ENCODE measurements at regions of chr19 and their contacts with region 1.

Region 1: GRCh38 chr19:2236314-2237050 is at the starts of genes PLEKHJ1 and SF3A2:
- DNase-seq: peak; percentile 94 to 99 (median 98)
- ATAC-seq: peak; percentile 81
- H3K4me3 ChIP-seq: peak within 1 kb of the TSS; percentile 80
- H3K4me3 Mint-ChIP-seq: peak within 1 kb of the TSS; percentile 98
- H3K27ac ChIP-seq: peak within 1 kb of the TSS; percentile 98 to 99
- H3K27ac Mint-ChIP-seq: peak within 1 kb of the TSS; percentile 99
- H3K4me1 ChIP-seq: peaks cover 79% of the 10 kb centered on the region
- H3K4me1 Mint-ChIP-seq: peaks cover 63% of the 10 kb centered on the region
- H3K27me3 ChIP-seq: no peaks in the 10 kb centered on the region
- H3K27me3 Mint-ChIP-seq: peaks cover 4% of the 10 kb centered on the region
- CTCF ChIP-seq: peak; percentile 99
- total RNA-seq, gene PLEKHJ1: 21.4 to 23.2 TPM
- total RNA-seq, gene SF3A2: 186 to 194 TPM

Region 2: DNA sequence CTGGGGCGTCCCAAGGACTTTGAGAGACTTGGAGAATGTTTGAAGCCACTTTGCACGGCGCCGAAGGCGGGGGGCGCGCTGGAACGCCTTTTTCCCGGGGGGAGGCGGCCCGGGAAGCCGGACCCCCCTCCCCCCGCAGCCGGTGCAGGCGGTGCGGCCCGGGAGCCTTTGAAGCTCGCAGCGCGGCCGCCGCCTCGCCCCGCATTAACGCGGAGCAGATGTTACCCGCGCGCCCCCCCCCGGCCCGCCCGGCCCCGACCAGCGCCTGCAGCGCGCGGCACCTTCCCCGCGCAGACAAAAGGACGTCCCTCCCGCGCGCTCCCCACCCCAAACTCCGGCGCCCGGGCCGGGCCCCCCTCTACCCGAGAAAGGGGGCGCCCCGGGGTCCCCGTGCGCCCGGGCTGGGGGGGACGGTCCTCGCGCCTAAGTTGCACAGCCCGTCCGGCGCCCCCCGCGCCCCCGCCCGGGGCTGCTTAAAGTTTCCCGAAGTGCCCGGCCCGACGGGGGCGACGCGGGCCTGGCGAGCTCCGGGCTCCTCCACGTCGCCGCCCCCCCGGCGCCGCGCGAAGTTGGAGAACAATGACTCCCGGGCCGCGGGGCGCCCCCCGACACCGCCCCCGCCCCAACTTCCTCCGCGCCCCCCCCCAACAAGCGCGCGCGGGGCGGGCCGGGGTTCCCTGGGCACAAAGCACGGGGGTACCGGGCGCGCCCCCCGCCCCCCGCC is 584.8 kb before region 1 on chr19:
- CTCF ChIA-PET with region 1: no interaction called
- POLR2A ChIA-PET with region 1: no interaction called
- intact Hi-C with region 1: no loop called
- DNase-seq: peak in 13 of 14 experiments; percentile 20 to 78 (median 49)
- ATAC-seq: no peak
- H3K4me3 ChIP-seq: peak overlapping the region; percentile 62
- H3K4me3 Mint-ChIP-seq: peak overlapping the region; percentile 97
- H3K27ac ChIP-seq: peak overlapping the region in 1 of 2 donors; percentile 56
- H3K27ac Mint-ChIP-seq: peak overlapping the region; percentile 94
- H3K4me1 ChIP-seq: peaks cover 26% of the 10 kb centered on the region
- H3K4me1 Mint-ChIP-seq: peaks cover 14% of the 10 kb centered on the region
- H3K27me3 ChIP-seq: no peaks in the 10 kb centered on the region
- H3K27me3 Mint-ChIP-seq: peaks cover 3% of the 10 kb centered on the region
- CTCF ChIP-seq: peak; percentile 20

Region 3: DNA sequence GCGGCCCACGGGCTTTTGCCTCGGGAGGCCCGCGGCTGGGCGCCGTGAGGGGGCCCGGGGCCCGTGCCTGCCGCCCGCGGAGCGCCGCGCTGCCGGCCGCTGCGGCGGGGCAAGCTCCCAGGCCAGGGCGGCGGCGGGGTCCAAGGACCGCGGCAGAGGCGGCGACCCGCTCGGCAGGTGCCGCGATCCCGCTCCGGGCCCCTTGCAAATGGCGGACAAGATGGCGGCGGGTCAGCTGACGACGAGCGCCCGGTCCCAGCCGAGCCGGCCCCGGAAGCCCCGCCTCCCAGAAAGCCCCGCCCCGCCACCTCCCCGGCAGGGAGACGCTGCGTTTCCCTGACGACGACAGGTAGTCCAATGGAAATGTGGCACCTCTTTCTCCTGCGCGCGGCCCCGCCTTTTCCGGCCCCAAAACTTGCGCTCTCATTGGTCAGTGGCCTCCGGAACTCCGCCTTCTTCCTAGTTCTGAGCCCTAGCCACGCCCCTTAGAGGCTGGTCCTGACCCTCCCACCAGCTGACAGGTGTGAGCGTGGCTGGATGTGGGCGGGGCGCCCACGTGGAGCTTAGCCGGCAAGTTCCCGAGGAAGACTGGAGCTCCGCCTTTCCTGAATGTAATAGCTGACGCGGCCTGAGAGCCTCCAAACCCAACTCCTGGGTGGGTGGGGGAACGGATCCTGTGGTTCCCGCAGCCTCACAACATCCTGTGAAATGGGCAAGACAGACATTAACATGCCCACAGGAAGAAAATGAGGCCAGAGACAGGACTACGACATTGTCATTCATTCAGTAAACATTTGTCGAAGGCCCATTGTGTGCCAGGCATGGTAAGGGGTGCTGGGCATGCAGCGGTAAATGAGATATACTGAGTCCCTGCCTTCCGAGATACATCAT is 84.9 kb before region 1 on chr19 and contains the start of gene AP3D1:
- CTCF ChIA-PET with region 1: interaction called, 11 read pairs
- POLR2A ChIA-PET with region 1: interaction called, 5 read pairs
- intact Hi-C with region 1: loop called (anchors 1 kb)
- DNase-seq: peak; percentile 100
- ATAC-seq: peak; percentile 87
- H3K4me3 ChIP-seq: peak within 1 kb of the TSS; percentile 80
- H3K4me3 Mint-ChIP-seq: peak within 1 kb of the TSS; percentile 93
- H3K27ac ChIP-seq: peak within 1 kb of the TSS; percentile 77 to 92
- H3K27ac Mint-ChIP-seq: peak within 1 kb of the TSS; percentile 90
- H3K4me1 ChIP-seq: peaks cover 50% of the 10 kb centered on the region
- H3K4me1 Mint-ChIP-seq: peaks cover 31% of the 10 kb centered on the region
- H3K27me3 ChIP-seq: no peaks in the 10 kb centered on the region
- H3K27me3 Mint-ChIP-seq: no peaks in the 10 kb centered on the region
- CTCF ChIP-seq: no peak
- total RNA-seq, gene AP3D1: 41.8 to 41.9 TPM

Region 4: DNA sequence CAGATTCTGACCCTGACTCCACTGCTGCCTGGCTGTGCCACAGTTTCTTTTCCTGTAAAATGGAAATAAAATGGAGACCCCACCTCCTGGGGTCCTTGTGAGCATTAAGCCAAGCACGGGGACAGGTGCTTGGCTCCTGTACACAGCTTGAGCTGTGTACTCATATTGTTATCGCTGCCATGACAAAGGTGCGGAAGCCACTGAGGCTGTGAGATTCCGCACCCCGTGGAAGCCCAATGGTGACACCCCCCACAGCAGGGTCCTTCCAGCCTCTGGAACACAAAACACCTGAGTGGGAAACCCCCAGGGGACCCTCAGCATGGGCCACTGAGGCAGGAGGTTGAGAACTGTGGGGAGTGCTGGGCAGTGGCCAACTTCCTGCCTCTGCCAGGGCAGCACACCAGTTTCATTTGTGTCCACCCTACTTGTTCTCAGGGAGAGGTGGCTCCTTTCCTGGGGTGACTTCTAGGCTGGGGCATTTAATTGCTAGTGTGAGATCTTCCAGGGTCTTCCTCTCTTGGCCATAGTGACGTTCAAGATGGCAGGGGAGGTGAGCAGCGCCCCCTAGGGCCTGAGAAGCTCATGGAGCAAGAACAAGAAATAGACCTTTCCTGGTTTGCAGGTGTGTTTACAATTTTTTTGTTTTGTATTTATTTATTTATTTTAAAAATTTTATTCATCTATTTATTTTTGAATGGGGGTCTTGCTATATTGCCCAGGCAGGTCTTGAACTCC is 25.1 kb after region 1 on chr19:
- CTCF ChIA-PET with region 1: interaction called, 6 read pairs
- POLR2A ChIA-PET with region 1: interaction called, 46 read pairs
- intact Hi-C with region 1: loop called in 1 of 2 experiments (anchors 1 kb)
- DNase-seq: peak in 8 of 14 experiments; percentile 52 to 78 (median 68)
- ATAC-seq: no peak
- H3K4me3 ChIP-seq: no peak overlapping the region
- H3K4me3 Mint-ChIP-seq: no peak overlapping the region
- H3K27ac ChIP-seq: no peak overlapping the region
- H3K27ac Mint-ChIP-seq: peak overlapping the region; percentile 76
- H3K4me1 ChIP-seq: peaks cover 57% of the 10 kb centered on the region
- H3K4me1 Mint-ChIP-seq: peaks cover 33% of the 10 kb centered on the region
- H3K27me3 ChIP-seq: no peaks in the 10 kb centered on the region
- H3K27me3 Mint-ChIP-seq: no peaks in the 10 kb centered on the region
- CTCF ChIP-seq: peak; percentile 59

Region 5: GRCh38 chr19:2328401-2329148 is 92.1 kb after region 1 on chr19 and contains the starts of genes LSM7 and SPPL2B:
- CTCF ChIA-PET with region 1: no interaction called
- POLR2A ChIA-PET with region 1: interaction called, 4 read pairs
- intact Hi-C with region 1: loop called (anchors 1 to 2 kb)
- DNase-seq: peak; percentile 86 to 98 (median 92)
- ATAC-seq: peak; percentile 69
- H3K4me3 ChIP-seq: peak within 1 kb of the TSS; percentile 96
- H3K4me3 Mint-ChIP-seq: peak within 1 kb of the TSS; percentile 100
- H3K27ac ChIP-seq: peak within 1 kb of the TSS; percentile 57 to 78
- H3K27ac Mint-ChIP-seq: peak within 1 kb of the TSS; percentile 93
- H3K4me1 ChIP-seq: peaks cover 70% of the 10 kb centered on the region
- H3K4me1 Mint-ChIP-seq: peaks cover 74% of the 10 kb centered on the region
- H3K27me3 ChIP-seq: no peaks in the 10 kb centered on the region
- H3K27me3 Mint-ChIP-seq: no peaks in the 10 kb centered on the region
- CTCF ChIP-seq: no peak
- total RNA-seq, gene LSM7: 73.6 to 80.1 TPM
- total RNA-seq, gene SPPL2B: 106 to 111 TPM

Region 6: GRCh38 chr19:2455851-2456570 is 219.5 kb after region 1 on chr19:
- CTCF ChIA-PET with region 1: no interaction called
- POLR2A ChIA-PET with region 1: interaction called, 3 read pairs
- intact Hi-C with region 1: loop called in 1 of 2 experiments (anchors 2 kb)
- DNase-seq: peak in 9 of 14 experiments; percentile 19 to 83 (median 42)
- ATAC-seq: peak; percentile 33
- H3K4me3 ChIP-seq: peak overlapping the region; percentile 74
- H3K4me3 Mint-ChIP-seq: peak overlapping the region; percentile 85
- H3K27ac ChIP-seq: no peak overlapping the region
- H3K27ac Mint-ChIP-seq: peak overlapping the region; percentile 30
- H3K4me1 ChIP-seq: peaks cover 25% of the 10 kb centered on the region
- H3K4me1 Mint-ChIP-seq: peaks cover 13% of the 10 kb centered on the region
- H3K27me3 ChIP-seq: no peaks in the 10 kb centered on the region
- H3K27me3 Mint-ChIP-seq: no peaks in the 10 kb centered on the region
- CTCF ChIP-seq: no peak